ENCODE measurements at regions of chr6 and their contacts with region 1.

Region 1: GRCh38 chr6:154733012-154733625 is at the start of gene SCAF8:
- DNase-seq: peak; percentile 92 to 94
- ATAC-seq: peak; percentile 66 to 89 (median 73)
- H3K4me3 ChIP-seq: peak within 1 kb of the TSS; percentile 89
- H3K4me3 Mint-ChIP-seq: peak within 1 kb of the TSS; percentile 92
- H3K27ac ChIP-seq: peak within 1 kb of the TSS; percentile 96
- H3K27ac Mint-ChIP-seq: peak within 1 kb of the TSS; percentile 90 to 95
- H3K4me1 ChIP-seq: peaks cover 29% of the 10 kb centered on the region
- H3K4me1 Mint-ChIP-seq: peaks cover 24 to 33% of the 10 kb centered on the region in 2 donors
- H3K27me3 ChIP-seq: no peaks in the 10 kb centered on the region
- H3K27me3 Mint-ChIP-seq: no peaks in the 10 kb centered on the region
- CTCF ChIP-seq: peak; percentile 87
- total RNA-seq, gene SCAF8: 60.0 to 74.3 (median 68.2) TPM

Region 2: GRCh38 chr6:154675602-154676088 is 57.5 kb before region 1 on chr6:
- intact Hi-C with region 1: loop called (anchors 1 kb)
- DNase-seq: peak; percentile 75 to 96
- ATAC-seq: peak; percentile 100
- H3K4me3 ChIP-seq: no peak overlapping the region
- H3K4me3 Mint-ChIP-seq: no peak overlapping the region
- H3K27ac ChIP-seq: no peak overlapping the region
- H3K27ac Mint-ChIP-seq: no peak overlapping the region
- H3K4me1 ChIP-seq: no peaks in the 10 kb centered on the region
- H3K4me1 Mint-ChIP-seq: no peaks in the 10 kb centered on the region
- H3K27me3 ChIP-seq: no peaks in the 10 kb centered on the region
- H3K27me3 Mint-ChIP-seq: no peaks in the 10 kb centered on the region
- CTCF ChIP-seq: peak; percentile 99

Region 3: GRCh38 chr6:154705471-154706113 is 27.5 kb before region 1 on chr6:
- intact Hi-C with region 1: no loop called
- DNase-seq: peak in 1 of 2 donors; percentile 38
- ATAC-seq: peak in 2 of 3 donors; percentile 42 to 43
- H3K4me3 ChIP-seq: no peak overlapping the region
- H3K4me3 Mint-ChIP-seq: no peak overlapping the region
- H3K27ac ChIP-seq: no peak overlapping the region
- H3K27ac Mint-ChIP-seq: no peak overlapping the region
- H3K4me1 ChIP-seq: no peaks in the 10 kb centered on the region
- H3K4me1 Mint-ChIP-seq: no peaks in the 10 kb centered on the region
- H3K27me3 ChIP-seq: peaks cover 2% of the 10 kb centered on the region
- H3K27me3 Mint-ChIP-seq: peaks cover 19 to 41% of the 10 kb centered on the region in 2 donors
- CTCF ChIP-seq: peak; percentile 32

Region 4: DNA sequence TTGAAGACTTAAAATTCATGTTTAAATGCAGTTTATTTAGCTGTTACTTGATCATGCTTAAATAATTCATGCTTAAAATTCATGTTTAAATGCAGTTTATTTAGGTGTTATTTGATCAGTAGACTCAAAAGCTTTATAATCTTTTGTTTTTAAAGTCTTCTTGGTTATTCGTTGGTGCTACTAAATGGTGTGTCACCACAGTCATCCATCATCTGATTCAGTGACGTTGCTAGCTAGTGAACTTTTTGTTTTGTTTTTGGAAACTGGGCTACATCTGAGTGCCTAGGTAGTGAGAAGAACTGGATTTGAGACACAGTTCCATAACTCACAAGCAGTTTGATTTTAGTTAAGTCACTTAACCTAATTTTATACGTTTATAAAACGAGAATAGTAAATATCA is 21.0 kb after region 1 on chr6:
- intact Hi-C with region 1: loop called (anchors 2 kb)
- DNase-seq: peak in 1 of 2 donors; percentile 18
- ATAC-seq: peak; percentile 76 to 86 (median 86)
- H3K4me3 ChIP-seq: no peak overlapping the region
- H3K4me3 Mint-ChIP-seq: no peak overlapping the region
- H3K27ac ChIP-seq: no peak overlapping the region
- H3K27ac Mint-ChIP-seq: peak overlapping the region; percentile 86 to 89
- H3K4me1 ChIP-seq: peaks cover 18% of the 10 kb centered on the region
- H3K4me1 Mint-ChIP-seq: peaks cover 70 to 73% of the 10 kb centered on the region in 2 donors
- H3K27me3 ChIP-seq: no peaks in the 10 kb centered on the region
- H3K27me3 Mint-ChIP-seq: no peaks in the 10 kb centered on the region
- CTCF ChIP-seq: no peak

Region 5: GRCh38 chr6:154805288-154805911 is 72.3 kb after region 1 on chr6:
- intact Hi-C with region 1: loop called (anchors 1 kb)
- DNase-seq: peak in 1 of 2 donors; percentile 65
- ATAC-seq: peak; percentile 67 to 92 (median 76)
- H3K4me3 ChIP-seq: no peak overlapping the region
- H3K4me3 Mint-ChIP-seq: no peak overlapping the region
- H3K27ac ChIP-seq: no peak overlapping the region
- H3K27ac Mint-ChIP-seq: peak overlapping the region; percentile 6 to 58
- H3K4me1 ChIP-seq: no peaks in the 10 kb centered on the region
- H3K4me1 Mint-ChIP-seq: peaks cover under 1 to 7% of the 10 kb centered on the region in 2 donors
- H3K27me3 ChIP-seq: no peaks in the 10 kb centered on the region
- H3K27me3 Mint-ChIP-seq: no peaks in the 10 kb centered on the region
- CTCF ChIP-seq: peak; percentile 83

Region 6: GRCh38 chr6:155314092-155314772 is 581.1 kb after region 1 on chr6 and contains the start of gene TFB1M:
- intact Hi-C with region 1: loop called (anchors 5 kb)
- DNase-seq: peak; percentile 94 to 99
- ATAC-seq: peak; percentile 90 to 96 (median 91)
- H3K4me3 ChIP-seq: peak within 1 kb of the TSS; percentile 84
- H3K4me3 Mint-ChIP-seq: peak within 1 kb of the TSS; percentile 94
- H3K27ac ChIP-seq: peak within 1 kb of the TSS; percentile 73
- H3K27ac Mint-ChIP-seq: peak within 1 kb of the TSS; percentile 94 to 98
- H3K4me1 ChIP-seq: peaks cover 3% of the 10 kb centered on the region
- H3K4me1 Mint-ChIP-seq: peaks cover 19 to 22% of the 10 kb centered on the region in 2 donors
- H3K27me3 ChIP-seq: no peaks in the 10 kb centered on the region
- H3K27me3 Mint-ChIP-seq: peaks cover 0 to 2% of the 10 kb centered on the region in 2 donors
- CTCF ChIP-seq: no peak
- total RNA-seq, gene TFB1M: 14.1 to 20.1 (median 17.1) TPM